ENCODE measurements at regions of chr1 and their contacts with region 1.

Region 1: DNA sequence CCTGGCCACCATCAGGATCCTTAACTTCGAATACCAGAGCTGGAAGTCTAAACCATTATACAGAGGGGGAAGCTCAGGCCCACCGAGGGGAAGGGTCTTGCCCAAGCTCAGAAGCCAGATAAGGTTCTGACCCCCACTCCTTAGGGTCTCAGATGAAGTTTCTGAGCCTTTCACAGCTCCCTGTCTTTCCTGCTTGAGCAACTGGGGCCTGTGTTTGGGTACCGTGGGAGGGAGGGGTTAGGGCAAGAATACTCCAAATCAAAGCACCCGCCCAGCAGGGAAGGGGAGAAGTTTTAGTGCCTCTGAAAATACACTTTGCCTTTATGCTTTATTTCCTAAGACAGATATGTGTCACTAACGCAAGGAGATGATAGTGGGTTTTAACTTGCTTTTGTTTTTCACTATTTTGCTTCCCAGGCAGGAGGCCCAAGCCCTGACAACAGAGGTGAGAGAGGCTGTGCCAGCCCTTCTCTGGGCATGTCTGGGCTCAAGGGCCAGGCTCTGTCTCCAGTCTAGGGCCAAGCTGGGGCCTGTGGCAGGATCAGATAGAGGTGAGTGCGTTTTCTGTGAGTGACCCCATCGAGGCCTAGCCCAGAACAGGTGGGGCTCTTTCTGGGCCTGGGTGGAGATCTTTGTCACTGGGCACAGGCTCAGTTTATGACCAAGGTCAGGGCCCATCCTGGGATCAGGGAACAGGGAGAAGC is 20.5 kb upstream of the TENT5B start:
- DNase-seq: no peak
- H3K4me3 ChIP-seq: no peak overlapping the region
- H3K27ac ChIP-seq: no peak overlapping the region
- H3K4me1 ChIP-seq: peaks cover 0 to 9% (median 8%) of the 10 kb centered on the region in 4 experiments
- H3K27me3 ChIP-seq: no peaks in the 10 kb centered on the region

Region 2: DNA sequence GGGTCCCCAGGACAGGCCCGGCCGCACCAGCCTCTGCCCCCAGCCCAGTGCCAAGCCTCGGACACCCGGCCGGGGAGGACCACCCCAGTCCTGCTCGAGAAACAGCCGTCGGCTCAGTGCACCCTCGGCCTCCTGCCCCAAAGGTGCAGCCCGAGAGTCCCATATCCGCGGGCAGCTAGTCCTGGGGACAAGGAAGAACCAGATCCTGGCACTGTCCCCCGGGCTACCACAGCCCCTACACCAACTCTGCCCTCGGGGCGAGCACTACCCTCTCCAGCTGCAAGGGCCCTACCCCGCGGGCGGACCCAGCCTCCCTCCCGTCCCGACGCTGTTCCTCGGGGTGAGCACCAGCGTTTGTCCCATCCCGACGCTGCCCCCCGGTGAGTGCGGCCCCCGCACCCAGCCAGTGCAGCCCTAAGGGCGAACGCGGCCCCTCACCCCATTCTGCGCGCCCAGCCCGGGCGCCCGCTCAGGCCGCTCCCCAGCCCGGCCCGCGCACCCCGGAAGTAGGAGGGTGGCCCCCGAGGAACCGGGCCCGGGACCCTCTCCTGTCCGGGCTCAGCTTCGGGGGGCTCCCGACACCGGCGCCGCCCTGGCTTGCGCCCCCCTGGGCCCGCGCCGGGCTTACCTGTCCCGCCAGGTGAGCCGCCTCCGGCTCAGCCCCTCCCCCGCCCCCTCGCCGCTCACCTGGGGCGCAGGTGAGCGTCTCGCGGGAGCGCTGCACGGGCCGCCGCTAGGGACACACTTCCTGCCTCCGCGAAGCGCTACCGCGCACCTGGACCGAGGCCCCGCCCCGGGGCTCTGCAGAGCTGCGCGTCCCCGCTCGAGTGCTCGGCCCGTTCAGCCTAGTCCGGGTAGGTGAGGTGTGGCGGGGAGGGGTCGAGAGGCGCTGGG is 73.2 kb before region 1 on chr1 and contains the start of gene KDF1:
- CTCF ChIA-PET with region 1: no interaction called
- POLR2A ChIA-PET with region 1: no interaction called
- DNase-seq: peak in 1 of 3 donors; percentile 31
- H3K4me3 ChIP-seq: peak within 1 kb of the TSS; percentile 11 to 68 (median 46)
- H3K27ac ChIP-seq: no peak within 1 kb of the TSS
- H3K4me1 ChIP-seq: peaks cover 0 to 16% (median 13%) of the 10 kb centered on the region in 4 experiments
- H3K27me3 ChIP-seq: peaks cover 6 to 54% (median 30%) of the 10 kb centered on the region in 5 experiments

Region 3: GRCh38 chr1:26999440-26999987 is 33.7 kb before region 1 on chr1:
- CTCF ChIA-PET with region 1: interaction called, 18 read pairs
- POLR2A ChIA-PET with region 1: no interaction called
- DNase-seq: no peak
- H3K4me3 ChIP-seq: no peak overlapping the region
- H3K27ac ChIP-seq: no peak overlapping the region
- H3K4me1 ChIP-seq: peaks cover 3 to 36% (median 23%) of the 10 kb centered on the region in 4 experiments
- H3K27me3 ChIP-seq: peaks cover 3 to 23% (median 13%) of the 10 kb centered on the region in 5 experiments